ENCODE measurements at regions of chr20 and their contacts with region 1.

Region 1: DNA sequence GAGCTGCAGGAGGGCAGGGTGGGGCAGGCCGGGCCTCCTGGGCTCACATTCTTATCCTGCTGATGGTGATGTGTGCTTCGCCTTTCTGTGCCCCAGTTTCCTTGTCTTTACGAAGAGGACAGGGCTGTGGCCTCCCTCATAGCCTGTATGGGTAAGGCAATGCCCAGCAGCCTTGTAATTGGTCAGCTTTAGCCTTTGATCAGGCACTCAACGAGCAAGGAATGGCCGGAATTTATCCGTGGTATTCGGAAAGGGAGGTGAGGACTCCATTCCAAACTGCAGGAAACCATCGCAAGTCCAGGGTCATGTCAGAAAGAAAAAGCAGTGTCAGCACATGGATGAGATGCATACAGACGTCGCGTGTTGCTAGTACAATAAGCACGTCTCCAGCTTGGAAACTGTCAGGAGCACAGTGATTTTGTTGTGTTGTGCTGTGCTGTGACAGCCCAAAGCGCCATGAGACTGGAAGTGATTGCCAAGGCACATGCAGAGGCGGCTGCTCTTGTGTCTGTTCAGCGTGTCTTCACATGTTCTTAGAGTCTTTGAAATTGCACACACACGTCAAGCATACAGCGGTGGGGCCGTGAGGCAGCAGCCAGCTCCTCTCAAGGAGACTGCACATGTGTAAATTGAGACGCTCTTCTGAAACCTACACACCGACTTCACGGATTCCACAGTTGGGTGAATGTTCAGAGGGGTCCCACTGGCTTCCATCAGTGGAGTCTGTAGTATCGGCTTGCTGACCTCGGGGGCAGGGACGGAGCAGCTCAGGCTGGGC is 6.2 kb downstream of the SS18L1 start:
- DNase-seq: peak; percentile 84
- H3K27ac ChIP-seq: peak overlapping the region; percentile 86
- CTCF ChIP-seq: no peak

Region 2: GRCh38 chr20:62136283-62137091 is 13.2 kb before region 1 on chr20:
- CTCF ChIA-PET with region 1: interaction called, 13 read pairs
- POLR2A ChIA-PET with region 1: interaction called, 5 read pairs
- DNase-seq: peak; percentile 64
- H3K27ac ChIP-seq: peak overlapping the region; percentile 56
- CTCF ChIP-seq: peak; percentile 98

Region 3: GRCh38 chr20:62164879-62165761 is 15.4 kb after region 1 on chr20:
- CTCF ChIA-PET with region 1: no interaction called
- POLR2A ChIA-PET with region 1: no interaction called
- DNase-seq: no peak
- H3K27ac ChIP-seq: peak overlapping the region; percentile 89
- CTCF ChIP-seq: no peak

Region 4: GRCh38 chr20:62193079-62194025 is 43.6 kb after region 1 on chr20:
- CTCF ChIA-PET with region 1: no interaction called
- POLR2A ChIA-PET with region 1: no interaction called
- DNase-seq: no peak
- H3K27ac ChIP-seq: peak overlapping the region; percentile 5; the same call in 1 of the 2 replicates
- CTCF ChIP-seq: no peak